ENCODE measurements at regions of chr10 and their contacts with region 1.

Region 1: DNA sequence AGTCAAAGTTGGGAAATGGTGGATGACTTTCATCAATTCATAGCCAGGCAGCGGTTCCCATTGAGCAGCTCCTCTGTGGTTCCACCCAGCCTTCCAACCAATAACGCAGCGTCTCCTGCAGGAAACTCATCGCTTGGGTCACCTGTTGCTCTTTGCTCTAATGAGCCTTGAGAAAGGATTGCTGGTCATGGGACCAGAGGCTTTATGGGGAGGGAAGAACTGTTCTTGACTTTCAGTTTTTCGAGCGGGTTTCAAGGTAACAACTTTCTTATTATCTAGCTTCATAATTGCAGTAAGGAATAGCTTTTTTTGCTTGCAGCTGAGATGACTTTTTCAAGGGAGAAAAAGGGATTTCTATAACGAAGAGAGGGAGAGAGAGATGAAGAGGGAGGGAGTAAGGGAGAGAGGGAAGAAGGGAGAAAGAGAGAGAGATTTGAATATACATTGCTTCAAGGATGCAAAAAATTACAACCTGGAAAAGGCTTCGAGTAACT is 405 bp upstream of the ENTPD1 start:
- DNase-seq: peak; percentile 14 to 81
- H3K4me3 ChIP-seq: peak overlapping the region; percentile 49 to 61
- H3K27ac ChIP-seq: peak overlapping the region; percentile 63 to 79
- H3K4me1 ChIP-seq: peaks cover 0 to 21% of the 10 kb centered on the region in 2 donors
- H3K27me3 ChIP-seq: no peaks in the 10 kb centered on the region
- CTCF ChIP-seq: no peak

Region 2: GRCh38 chr10:95814011-95814727 is 58.6 kb after region 1 on chr10:
- intact Hi-C with region 1: loop called (anchors 10 kb)
- DNase-seq: no peak
- H3K4me3 ChIP-seq: no peak overlapping the region
- H3K27ac ChIP-seq: peak overlapping the region in 1 of 2 donors; percentile 11
- H3K4me1 ChIP-seq: peaks cover 0 to 3% of the 10 kb centered on the region in 2 donors
- H3K27me3 ChIP-seq: no peaks in the 10 kb centered on the region
- CTCF ChIP-seq: no peak

Measured in ascending aorta (tissue), 2 donors.